ENCODE measurements at regions of chr6 and their contacts with region 1.

Region 1: GRCh38 chr6:36546920-36547645 is at the start of gene STK38:
- DNase-seq: peak; percentile 85 to 90 (median 87)
- H3K4me3 ChIP-seq: peak within 1 kb of the TSS; percentile 89 to 99
- H3K4me3 Mint-ChIP-seq: peak within 1 kb of the TSS; percentile 94 to 100 (median 100)
- H3K27ac ChIP-seq: peak within 1 kb of the TSS; percentile 92
- H3K27ac Mint-ChIP-seq: peak within 1 kb of the TSS; percentile 94 to 99 (median 98)
- H3K4me1 ChIP-seq: peaks cover 48% of the 10 kb centered on the region
- H3K4me1 Mint-ChIP-seq: peaks cover 23 to 65% (median 39%) of the 10 kb centered on the region in 4 donors
- H3K27me3 ChIP-seq: no peaks in the 10 kb centered on the region
- H3K27me3 Mint-ChIP-seq: no peaks in the 10 kb centered on the region
- total RNA-seq, gene STK38: 186 to 190 TPM

Region 2: GRCh38 chr6:36442671-36443470 is 104.2 kb before region 1 on chr6 and contains the starts of genes KCTD20 and PXT1:
- CTCF ChIA-PET with region 1: no interaction called
- POLR2A ChIA-PET with region 1: interaction called, 5 read pairs
- intact Hi-C with region 1: loop called (anchors 5 kb)
- DNase-seq: peak; percentile 83 to 86 (median 85)
- H3K4me3 ChIP-seq: peak within 1 kb of the TSS; percentile 85 to 96
- H3K4me3 Mint-ChIP-seq: peak within 1 kb of the TSS; percentile 92 to 99 (median 97)
- H3K27ac ChIP-seq: peak within 1 kb of the TSS; percentile 92
- H3K27ac Mint-ChIP-seq: peak within 1 kb of the TSS; percentile 87 to 99 (median 99)
- H3K4me1 ChIP-seq: peaks cover 53% of the 10 kb centered on the region
- H3K4me1 Mint-ChIP-seq: peaks cover 27 to 61% (median 42%) of the 10 kb centered on the region in 4 donors
- H3K27me3 ChIP-seq: no peaks in the 10 kb centered on the region
- H3K27me3 Mint-ChIP-seq: no peaks in the 10 kb centered on the region
- total RNA-seq, gene KCTD20: 35.2 to 38.9 TPM
- total RNA-seq, gene PXT1: 0.25 TPM in 1 of 2 experiments, not detected in the other

Region 3: GRCh38 chr6:36478051-36478526 is 69.0 kb before region 1 on chr6:
- CTCF ChIA-PET with region 1: no interaction called
- POLR2A ChIA-PET with region 1: no interaction called
- intact Hi-C with region 1: no loop called
- DNase-seq: no peak
- H3K4me3 ChIP-seq: no peak overlapping the region
- H3K4me3 Mint-ChIP-seq: no peak overlapping the region
- H3K27ac ChIP-seq: no peak overlapping the region
- H3K27ac Mint-ChIP-seq: peak overlapping the region in 4 of 7 donors; percentile 10 to 71 (median 40)
- H3K4me1 ChIP-seq: no peaks in the 10 kb centered on the region
- H3K4me1 Mint-ChIP-seq: peaks cover 9 to 20% (median 13%) of the 10 kb centered on the region in 4 donors
- H3K27me3 ChIP-seq: no peaks in the 10 kb centered on the region
- H3K27me3 Mint-ChIP-seq: no peaks in the 10 kb centered on the region

Region 4: DNA sequence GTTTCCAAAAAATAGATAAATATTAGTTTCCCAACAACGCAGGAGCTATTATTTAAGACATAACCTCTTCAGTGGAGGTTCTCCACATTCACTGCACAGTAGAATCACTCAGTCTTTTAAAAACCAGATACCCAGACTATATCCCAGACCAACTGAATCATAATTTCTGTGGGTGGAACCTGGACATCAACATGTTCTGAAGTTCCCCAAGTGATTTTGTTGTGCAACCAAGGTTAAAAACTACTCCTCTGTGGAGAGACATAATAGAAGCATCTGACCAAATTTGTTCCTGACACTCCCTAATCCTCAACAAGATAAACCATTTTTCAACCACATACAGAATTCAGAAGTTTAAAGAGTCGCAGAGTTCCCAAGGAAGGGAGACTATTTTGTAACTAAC is 42.1 kb before region 1 on chr6:
- CTCF ChIA-PET with region 1: no interaction called
- POLR2A ChIA-PET with region 1: interaction called, 28 read pairs
- intact Hi-C with region 1: loop called (anchors 5 kb)
- DNase-seq: no peak
- H3K4me3 ChIP-seq: no peak overlapping the region
- H3K4me3 Mint-ChIP-seq: peak overlapping the region in 1 of 8 donors; percentile 30
- H3K27ac ChIP-seq: no peak overlapping the region
- H3K27ac Mint-ChIP-seq: peak overlapping the region in 5 of 7 donors; percentile 36 to 91 (median 56)
- H3K4me1 ChIP-seq: peaks cover 33% of the 10 kb centered on the region
- H3K4me1 Mint-ChIP-seq: peaks cover 31 to 50% (median 42%) of the 10 kb centered on the region in 4 donors
- H3K27me3 ChIP-seq: no peaks in the 10 kb centered on the region
- H3K27me3 Mint-ChIP-seq: no peaks in the 10 kb centered on the region

Region 5: GRCh38 chr6:36533321-36533720 is 13.8 kb before region 1 on chr6:
- CTCF ChIA-PET with region 1: interaction called, 3 read pairs
- POLR2A ChIA-PET with region 1: interaction called, 48 read pairs
- intact Hi-C with region 1: no loop called
- DNase-seq: no peak
- H3K4me3 ChIP-seq: no peak overlapping the region
- H3K4me3 Mint-ChIP-seq: peak overlapping the region in 1 of 8 donors; percentile 72
- H3K27ac ChIP-seq: no peak overlapping the region
- H3K27ac Mint-ChIP-seq: peak overlapping the region in 5 of 7 donors; percentile 3 to 62 (median 13)
- H3K4me1 ChIP-seq: peaks cover 82% of the 10 kb centered on the region
- H3K4me1 Mint-ChIP-seq: peaks cover 44 to 89% (median 68%) of the 10 kb centered on the region in 4 donors
- H3K27me3 ChIP-seq: no peaks in the 10 kb centered on the region
- H3K27me3 Mint-ChIP-seq: no peaks in the 10 kb centered on the region

Region 6: DNA sequence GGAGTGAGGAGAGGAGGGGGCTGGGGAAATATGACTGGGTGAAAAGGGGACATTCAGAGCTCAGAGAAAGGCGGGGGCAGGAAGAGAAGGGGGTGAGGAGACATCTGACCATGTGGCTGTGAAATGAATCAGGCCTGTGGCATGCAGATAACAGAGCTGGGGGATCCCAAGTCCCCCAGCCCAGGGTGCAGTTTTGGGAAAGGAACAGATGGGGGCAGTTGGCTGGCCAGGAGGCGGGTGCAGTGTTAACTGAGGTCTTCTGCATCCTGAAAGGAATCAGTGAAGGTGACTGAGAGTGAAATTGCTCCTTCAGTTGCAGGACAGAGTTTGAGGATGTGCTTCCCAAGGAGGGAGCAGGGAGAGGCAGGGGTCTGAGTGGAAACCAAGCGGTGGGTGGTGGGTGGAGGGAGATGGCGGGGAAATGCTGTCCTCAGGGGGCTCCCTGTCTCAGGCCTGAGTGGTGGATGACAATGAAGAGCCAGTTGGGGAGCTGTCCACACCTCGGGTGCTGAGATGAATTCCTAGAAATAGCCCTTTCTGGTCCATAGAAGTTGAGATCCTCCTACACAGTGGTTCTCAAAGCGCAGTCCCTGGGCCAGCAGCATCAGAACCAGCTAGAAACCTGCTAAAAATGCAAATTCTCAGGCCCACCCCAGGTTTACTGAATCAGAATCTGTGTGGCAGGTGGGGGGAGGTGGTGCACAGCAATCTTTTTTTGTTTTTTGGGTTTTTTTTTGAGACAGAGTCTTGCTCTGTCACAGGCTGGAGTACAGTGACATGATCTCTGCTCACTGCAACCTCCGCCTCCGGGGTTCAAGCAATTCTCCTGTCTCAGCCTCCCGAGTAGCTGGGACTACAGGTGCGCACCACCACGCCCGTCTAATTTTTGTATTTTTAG is 978.6 kb after region 1 on chr6:
- CTCF ChIA-PET with region 1: no interaction called
- POLR2A ChIA-PET with region 1: no interaction called
- intact Hi-C with region 1: no loop called
- DNase-seq: no peak
- H3K4me3 ChIP-seq: no peak overlapping the region
- H3K4me3 Mint-ChIP-seq: peak overlapping the region in 1 of 8 donors; percentile 55
- H3K27ac ChIP-seq: no peak overlapping the region
- H3K27ac Mint-ChIP-seq: peak overlapping the region in 2 of 7 donors; percentile 52 to 62
- H3K4me1 ChIP-seq: peaks cover 17% of the 10 kb centered on the region
- H3K4me1 Mint-ChIP-seq: peaks cover 21 to 80% (median 58%) of the 10 kb centered on the region in 4 donors
- H3K27me3 ChIP-seq: no peaks in the 10 kb centered on the region
- H3K27me3 Mint-ChIP-seq: no peaks in the 10 kb centered on the region

Measured in CD4-positive, alpha-beta memory T cell (primary cell).